Activated CD4-positive, alpha-beta memory T cell treated with anti-CD3 and anti-CD28 coated beads for 36 hours (primary cell): ENCODE measurements at regions of chr15 and their contacts with region 1.

Region 1: GRCh38 chr15:63752075-63752684 is 81.6 kb downstream of the HERC1 start:
- DNase-seq: peak; percentile 14
- H3K4me3 Mint-ChIP-seq: no peak overlapping the region
- H3K27ac Mint-ChIP-seq: no peak overlapping the region
- H3K4me1 Mint-ChIP-seq: peaks cover 2% of the 10 kb centered on the region
- H3K27me3 Mint-ChIP-seq: no peaks in the 10 kb centered on the region

Region 2: GRCh38 chr15:63610200-63610841 is 141.9 kb before region 1 on chr15:
- CTCF ChIA-PET with region 1: interaction called, 12 read pairs
- POLR2A ChIA-PET with region 1: no interaction called
- intact Hi-C with region 1: loop called (anchors 5 kb)
- DNase-seq: peak; percentile 89
- H3K4me3 Mint-ChIP-seq: no peak overlapping the region
- H3K27ac Mint-ChIP-seq: peak overlapping the region; percentile 86
- H3K4me1 Mint-ChIP-seq: peaks cover 31% of the 10 kb centered on the region
- H3K27me3 Mint-ChIP-seq: no peaks in the 10 kb centered on the region

Region 3: DNA sequence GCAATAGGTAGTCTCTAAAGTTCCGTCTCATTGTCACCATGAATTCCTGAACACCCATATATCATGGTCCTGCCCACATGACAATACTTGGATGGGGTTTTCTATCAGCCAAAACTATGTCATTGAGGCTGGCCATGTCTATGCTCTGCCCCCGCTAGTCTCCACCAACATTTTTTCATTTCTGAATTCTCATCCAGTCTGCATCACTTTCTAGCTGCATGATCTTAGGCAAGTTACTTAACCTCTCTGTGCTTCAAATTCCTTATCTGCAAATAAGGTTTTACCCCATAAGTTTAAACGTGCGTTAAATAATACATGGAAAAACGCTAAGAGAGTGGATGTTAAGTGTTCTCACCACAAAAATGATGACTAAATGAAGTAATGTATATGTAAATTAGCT is 67.5 kb after region 1 on chr15:
- CTCF ChIA-PET with region 1: interaction called, 5 read pairs
- POLR2A ChIA-PET with region 1: no interaction called
- intact Hi-C with region 1: loop called (anchors 5 kb)
- DNase-seq: no peak
- H3K4me3 Mint-ChIP-seq: no peak overlapping the region
- H3K27ac Mint-ChIP-seq: no peak overlapping the region
- H3K4me1 Mint-ChIP-seq: peaks cover 66% of the 10 kb centered on the region
- H3K27me3 Mint-ChIP-seq: no peaks in the 10 kb centered on the region

Region 4: GRCh38 chr15:63881431-63881830 is 129.3 kb after region 1 on chr15:
- CTCF ChIA-PET with region 1: interaction called, 16 read pairs
- POLR2A ChIA-PET with region 1: no interaction called
- intact Hi-C with region 1: no loop called
- DNase-seq: no peak
- H3K4me3 Mint-ChIP-seq: no peak overlapping the region
- H3K27ac Mint-ChIP-seq: no peak overlapping the region
- H3K4me1 Mint-ChIP-seq: peaks cover 2% of the 10 kb centered on the region
- H3K27me3 Mint-ChIP-seq: no peaks in the 10 kb centered on the region

Region 5: DNA sequence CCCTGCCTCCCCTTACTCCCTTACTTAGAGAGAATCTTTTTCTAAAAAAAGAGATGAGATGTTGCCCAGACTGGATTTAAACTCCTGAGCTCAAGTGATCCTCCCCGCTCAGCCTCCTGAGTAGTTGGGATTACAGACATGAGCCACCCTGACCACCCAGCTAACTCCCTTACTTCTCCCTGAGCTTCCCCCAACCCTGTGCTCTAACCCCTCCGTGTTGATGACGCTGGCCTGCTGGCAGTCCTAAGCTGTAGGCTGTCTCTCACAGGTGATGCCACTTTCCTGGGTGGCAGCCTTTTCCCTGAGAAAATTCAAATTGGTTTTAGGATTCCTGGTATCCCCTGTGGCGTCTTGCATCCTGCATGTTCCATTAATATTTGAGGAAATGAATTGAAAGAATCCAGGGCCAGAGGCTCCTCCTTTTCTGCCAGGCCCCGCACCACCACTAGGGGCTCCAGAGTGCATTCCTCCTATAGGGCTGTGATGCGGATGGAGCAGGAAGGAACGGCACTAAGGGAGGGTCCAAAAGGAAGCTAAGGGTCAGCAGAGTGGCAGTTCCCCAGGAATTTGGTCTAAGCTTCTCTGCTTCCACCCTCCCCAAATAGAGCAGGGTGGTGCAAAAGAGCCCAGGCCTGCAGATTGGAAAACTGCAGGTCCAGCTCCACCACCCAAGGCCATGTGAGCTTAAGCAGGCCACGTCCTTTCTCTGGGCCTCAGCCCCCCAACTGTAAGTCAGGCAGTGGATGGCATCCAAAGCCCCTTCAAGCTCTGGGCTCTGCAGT is 193.0 kb after region 1 on chr15:
- CTCF ChIA-PET with region 1: interaction called, 33 read pairs
- POLR2A ChIA-PET with region 1: no interaction called
- intact Hi-C with region 1: no loop called
- DNase-seq: peak; percentile 82
- H3K4me3 Mint-ChIP-seq: no peak overlapping the region
- H3K27ac Mint-ChIP-seq: no peak overlapping the region
- H3K4me1 Mint-ChIP-seq: peaks cover 7% of the 10 kb centered on the region
- H3K27me3 Mint-ChIP-seq: no peaks in the 10 kb centered on the region

Region 6: DNA sequence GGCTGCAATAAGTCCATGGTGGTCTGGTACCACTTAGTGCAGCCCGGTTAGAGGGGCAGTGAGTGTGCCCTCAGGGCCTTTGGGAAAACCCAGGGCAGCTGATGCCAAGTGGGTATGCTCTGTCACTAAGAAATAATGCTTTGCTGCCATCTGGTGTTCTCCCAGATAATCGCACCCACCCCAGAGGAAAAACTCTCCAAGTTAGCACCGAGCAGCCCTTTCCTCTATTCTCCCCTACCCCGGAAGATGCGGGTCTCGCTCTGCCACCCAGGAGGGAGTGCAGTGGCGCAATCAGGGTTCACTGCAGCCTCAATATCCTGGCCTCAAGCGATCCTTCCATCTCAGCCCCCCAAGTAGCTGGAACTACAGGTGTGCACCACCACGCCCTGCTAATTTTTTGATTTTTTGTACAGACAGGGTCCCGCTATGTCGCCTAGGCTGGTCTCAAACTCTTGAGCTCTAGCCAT is 315.4 kb after region 1 on chr15:
- CTCF ChIA-PET with region 1: interaction called, 161 read pairs
- POLR2A ChIA-PET with region 1: no interaction called
- intact Hi-C with region 1: loop called (anchors 1 kb)
- DNase-seq: peak; percentile 73
- H3K4me3 Mint-ChIP-seq: no peak overlapping the region
- H3K27ac Mint-ChIP-seq: peak overlapping the region; percentile 38
- H3K4me1 Mint-ChIP-seq: peaks cover 4% of the 10 kb centered on the region
- H3K27me3 Mint-ChIP-seq: no peaks in the 10 kb centered on the region